Naive thymus-derived CD4-positive, alpha-beta T cell (primary cell): ENCODE measurements at regions of chr13 and their contacts with region 1.

Region 1: DNA sequence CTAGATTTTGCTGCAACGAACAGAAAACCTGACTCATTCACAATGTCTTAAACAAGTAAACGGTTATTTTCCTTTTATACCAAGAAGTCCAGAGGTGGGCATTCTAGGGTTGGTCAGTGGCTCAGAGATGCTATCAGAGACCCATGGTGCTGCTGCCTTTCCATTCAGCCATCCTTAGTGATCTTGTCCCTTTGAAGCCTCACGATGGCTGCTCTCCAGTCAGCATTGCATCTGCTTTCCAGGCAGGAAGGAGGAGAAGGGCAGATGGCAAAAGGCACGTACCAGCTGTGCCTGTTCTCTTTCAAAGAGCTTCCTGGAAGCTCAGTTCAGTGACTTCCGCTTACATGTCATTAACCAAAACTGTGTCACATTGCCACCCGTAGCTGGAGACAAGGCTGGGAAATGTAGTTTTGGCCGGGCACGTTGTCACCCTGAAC is 30.1 kb downstream of the WDFY2 start:
- DNase-seq: peak in 8 of 9 donors; percentile 33 to 65 (median 58)
- ATAC-seq: peak; percentile 92
- H3K4me3 ChIP-seq: peak overlapping the region; percentile 59
- H3K4me3 Mint-ChIP-seq: peak overlapping the region; percentile 62 to 90 (median 81)
- H3K27ac ChIP-seq: peak overlapping the region; percentile 67
- H3K27ac Mint-ChIP-seq: peak overlapping the region; percentile 79 to 98 (median 93)
- H3K4me1 ChIP-seq: peaks cover 3 to 4% of the 10 kb centered on the region in 2 donors
- H3K4me1 Mint-ChIP-seq: peaks cover 11 to 26% (median 16%) of the 10 kb centered on the region in 7 donors
- H3K27me3 ChIP-seq: no peaks in the 10 kb centered on the region
- H3K27me3 Mint-ChIP-seq: peaks cover 0 to 2% (median 0%) of the 10 kb centered on the region in 5 donors

Region 2: GRCh38 chr13:51534041-51534817 is 80.1 kb before region 1 on chr13:
- CTCF ChIA-PET with region 1: no interaction called
- POLR2A ChIA-PET with region 1: no interaction called
- intact Hi-C with region 1: no loop called
- DNase-seq: peak in 6 of 9 donors; percentile 3 to 18 (median 10)
- ATAC-seq: peak; percentile 82
- H3K4me3 ChIP-seq: no peak overlapping the region
- H3K4me3 Mint-ChIP-seq: peak overlapping the region; percentile 38 to 79 (median 62)
- H3K27ac ChIP-seq: peak overlapping the region; percentile 40
- H3K27ac Mint-ChIP-seq: peak overlapping the region; percentile 41 to 90 (median 74)
- H3K4me1 ChIP-seq: peaks cover 22 to 24% of the 10 kb centered on the region in 2 donors
- H3K4me1 Mint-ChIP-seq: peaks cover 17 to 40% (median 25%) of the 10 kb centered on the region in 7 donors
- H3K27me3 ChIP-seq: no peaks in the 10 kb centered on the region
- H3K27me3 Mint-ChIP-seq: no peaks in the 10 kb centered on the region

Region 3: GRCh38 chr13:51635137-51635878 is 20.9 kb after region 1 on chr13:
- CTCF ChIA-PET with region 1: interaction called, 4 read pairs
- POLR2A ChIA-PET with region 1: interaction called, 3 read pairs
- intact Hi-C with region 1: loop called in 1 of 2 experiments (anchors 2 kb)
- DNase-seq: peak in 6 of 9 donors; percentile 25 to 49 (median 44)
- ATAC-seq: peak; percentile 57
- H3K4me3 ChIP-seq: no peak overlapping the region
- H3K4me3 Mint-ChIP-seq: peak overlapping the region; percentile 48 to 81 (median 74)
- H3K27ac ChIP-seq: peak overlapping the region; percentile 48
- H3K27ac Mint-ChIP-seq: peak overlapping the region; percentile 69 to 95 (median 89)
- H3K4me1 ChIP-seq: no peaks in the 10 kb centered on the region
- H3K4me1 Mint-ChIP-seq: peaks cover 22 to 74% (median 57%) of the 10 kb centered on the region in 7 donors
- H3K27me3 ChIP-seq: no peaks in the 10 kb centered on the region
- H3K27me3 Mint-ChIP-seq: no peaks in the 10 kb centered on the region

Region 4: DNA sequence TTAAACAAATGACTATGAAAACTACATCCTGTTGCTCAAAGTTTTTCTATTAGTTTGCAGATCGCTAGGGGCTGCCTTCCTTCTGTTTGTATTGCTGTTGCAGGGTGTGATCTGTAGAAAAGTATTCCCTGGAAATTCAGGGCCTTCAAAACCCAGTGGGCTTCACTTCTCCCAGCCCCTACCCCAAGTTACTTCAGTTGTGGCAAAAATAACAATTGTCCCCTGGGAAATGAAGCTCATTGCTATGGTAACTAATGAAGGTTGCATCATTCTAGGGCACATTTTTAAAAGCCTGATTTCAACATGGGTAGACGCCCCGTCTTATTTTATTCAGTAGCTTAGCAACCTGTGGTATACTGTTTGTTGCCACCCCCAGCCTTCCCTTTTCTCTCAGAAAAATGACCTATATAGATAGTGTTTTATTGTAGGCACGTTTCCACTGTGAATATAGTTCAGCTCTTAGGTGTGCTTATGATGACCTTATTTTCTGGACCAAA is 30.8 kb after region 1 on chr13:
- CTCF ChIA-PET with region 1: no interaction called
- POLR2A ChIA-PET with region 1: interaction called, 4 read pairs
- intact Hi-C with region 1: loop called in 1 of 2 experiments (anchors 5 kb)
- DNase-seq: peak in 8 of 9 donors; percentile 29 to 80 (median 70)
- ATAC-seq: peak; percentile 92
- H3K4me3 ChIP-seq: no peak overlapping the region
- H3K4me3 Mint-ChIP-seq: peak overlapping the region; percentile 43 to 77 (median 64)
- H3K27ac ChIP-seq: peak overlapping the region; percentile 61
- H3K27ac Mint-ChIP-seq: peak overlapping the region; percentile 72 to 97 (median 92)
- H3K4me1 ChIP-seq: peaks cover 26 to 39% of the 10 kb centered on the region in 2 donors
- H3K4me1 Mint-ChIP-seq: peaks cover 37 to 57% (median 49%) of the 10 kb centered on the region in 7 donors
- H3K27me3 ChIP-seq: no peaks in the 10 kb centered on the region
- H3K27me3 Mint-ChIP-seq: no peaks in the 10 kb centered on the region